Common myeloid progenitor, CD34-positive (primary cell): ENCODE measurements at regions of chr1 and their contacts with region 1.

Region 1: GRCh38 chr1:230158415-230159291 is 91.6 kb downstream of the GALNT2 start:
- DNase-seq: no peak
- H3K4me3 ChIP-seq: no peak overlapping the region
- H3K27ac ChIP-seq: peak overlapping the region in 1 of 2 experiments; percentile 39
- H3K4me1 ChIP-seq: peaks cover 5 to 64% (median 29%) of the 10 kb centered on the region in 4 experiments
- H3K27me3 ChIP-seq: no peaks in the 10 kb centered on the region

Region 2: GRCh38 chr1:230049731-230050130 is 108.9 kb before region 1 on chr1:
- CTCF ChIA-PET with region 1: no interaction called
- POLR2A ChIA-PET with region 1: no interaction called
- DNase-seq: no peak
- H3K4me3 ChIP-seq: no peak overlapping the region
- H3K27ac ChIP-seq: no peak overlapping the region
- H3K4me1 ChIP-seq: no peaks in the 10 kb centered on the region
- H3K27me3 ChIP-seq: no peaks in the 10 kb centered on the region

Region 3: GRCh38 chr1:230145953-230146476 is 12.6 kb before region 1 on chr1:
- CTCF ChIA-PET with region 1: interaction called, 10 read pairs
- POLR2A ChIA-PET with region 1: interaction called, 4 read pairs
- DNase-seq: peak; percentile 47 to 78 (median 73)
- H3K4me3 ChIP-seq: peak overlapping the region in 6 of 7 experiments; percentile 16 to 72 (median 50)
- H3K27ac ChIP-seq: peak overlapping the region; percentile 46 to 79
- H3K4me1 ChIP-seq: peaks cover 19 to 88% (median 82%) of the 10 kb centered on the region in 4 experiments
- H3K27me3 ChIP-seq: no peaks in the 10 kb centered on the region